Left lung (tissue), 14 donors: ENCODE measurements at regions of chr12 and their contacts with region 1.

Region 1: DNA sequence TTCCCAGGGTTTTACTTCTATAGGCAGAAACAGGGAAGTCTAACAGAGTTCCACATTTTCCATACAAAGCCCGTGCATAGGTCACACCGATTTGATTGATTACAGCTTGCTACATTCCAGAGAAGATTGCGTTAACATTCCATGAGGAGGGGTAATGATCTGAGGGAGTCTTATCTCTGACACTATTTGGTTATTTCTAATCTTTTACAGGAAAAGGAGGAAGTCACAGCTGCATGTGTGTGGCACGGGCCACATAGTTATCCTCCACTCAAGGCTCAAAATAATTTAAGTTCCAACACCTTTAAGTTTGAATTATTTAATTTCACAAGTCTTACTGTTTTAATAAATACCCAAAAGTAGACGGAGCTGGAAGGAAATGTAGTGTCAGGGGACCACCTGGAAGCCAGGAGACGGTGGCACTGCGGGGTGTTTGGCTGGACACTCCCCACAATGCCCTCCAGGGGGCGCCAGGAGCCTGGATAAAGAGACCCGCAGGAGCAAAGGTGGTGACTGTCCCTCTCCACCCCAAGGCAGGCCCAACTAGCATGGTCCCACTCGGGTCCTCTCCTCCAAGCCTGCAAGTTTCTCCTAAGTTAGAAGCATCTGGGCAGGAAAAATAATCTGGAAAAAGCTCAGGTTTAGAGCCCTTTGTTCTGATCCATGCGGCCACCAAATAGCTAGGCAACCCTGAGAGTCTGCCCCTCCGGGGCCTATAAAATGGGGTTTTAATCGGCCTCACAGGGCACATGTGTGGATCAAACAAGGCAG is 20.2 kb downstream of the KRT8 start:
- DNase-seq: peak in 3 of 4 donors; percentile 64 to 93 (median 77)
- ATAC-seq: peak; percentile 90
- H3K4me3 ChIP-seq: no peak overlapping the region
- H3K27ac ChIP-seq: no peak overlapping the region
- H3K4me1 ChIP-seq: peaks cover 1 to 8% of the 10 kb centered on the region in 2 donors
- H3K27me3 ChIP-seq: peaks cover 0 to 26% of the 10 kb centered on the region in 2 donors
- CTCF ChIP-seq: peak; percentile 89

Region 2: DNA sequence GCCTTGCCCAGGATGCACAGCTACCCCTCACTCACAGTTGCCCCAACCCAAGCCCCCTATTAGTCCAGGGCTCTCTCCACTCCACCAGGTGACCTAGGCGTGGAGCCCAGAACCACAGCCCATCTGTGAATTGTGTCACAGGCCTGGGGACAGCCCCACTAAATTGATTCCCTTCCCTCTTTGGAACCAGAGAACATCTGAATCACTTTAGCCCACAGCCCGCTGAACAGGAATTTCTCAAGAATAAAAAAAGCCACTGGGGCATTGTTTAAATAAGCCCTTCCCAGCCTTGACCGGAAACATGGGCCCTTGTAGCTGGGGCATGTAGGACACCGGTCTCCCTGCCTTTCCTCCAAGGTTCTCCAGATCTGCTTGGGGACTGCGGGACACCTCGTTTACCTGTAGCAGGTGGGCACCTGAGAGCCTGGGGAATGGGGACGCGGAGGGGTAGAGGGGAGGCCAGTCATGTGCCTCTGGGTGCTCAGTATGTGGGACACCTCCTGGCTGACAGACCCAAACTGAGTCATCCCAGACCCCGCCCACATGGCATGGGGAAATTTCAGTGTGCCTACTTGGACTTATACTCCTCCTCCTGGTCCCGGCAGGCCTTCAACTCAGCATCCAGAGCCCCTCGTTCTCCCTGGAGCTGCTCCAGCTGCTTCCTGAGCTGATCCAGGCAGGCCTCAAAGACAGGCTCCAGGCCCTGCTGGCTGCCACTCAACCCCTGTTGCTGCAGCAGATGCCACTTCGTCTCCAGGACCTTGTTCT is 37.2 kb before region 1 on chr12:
- intact Hi-C with region 1: no loop called
- DNase-seq: no peak
- ATAC-seq: peak; percentile 67
- H3K4me3 ChIP-seq: no peak overlapping the region
- H3K27ac ChIP-seq: no peak overlapping the region
- H3K4me1 ChIP-seq: no peaks in the 10 kb centered on the region
- H3K27me3 ChIP-seq: peaks cover 0 to 37% of the 10 kb centered on the region in 2 donors
- CTCF ChIP-seq: no peak

Region 3: DNA sequence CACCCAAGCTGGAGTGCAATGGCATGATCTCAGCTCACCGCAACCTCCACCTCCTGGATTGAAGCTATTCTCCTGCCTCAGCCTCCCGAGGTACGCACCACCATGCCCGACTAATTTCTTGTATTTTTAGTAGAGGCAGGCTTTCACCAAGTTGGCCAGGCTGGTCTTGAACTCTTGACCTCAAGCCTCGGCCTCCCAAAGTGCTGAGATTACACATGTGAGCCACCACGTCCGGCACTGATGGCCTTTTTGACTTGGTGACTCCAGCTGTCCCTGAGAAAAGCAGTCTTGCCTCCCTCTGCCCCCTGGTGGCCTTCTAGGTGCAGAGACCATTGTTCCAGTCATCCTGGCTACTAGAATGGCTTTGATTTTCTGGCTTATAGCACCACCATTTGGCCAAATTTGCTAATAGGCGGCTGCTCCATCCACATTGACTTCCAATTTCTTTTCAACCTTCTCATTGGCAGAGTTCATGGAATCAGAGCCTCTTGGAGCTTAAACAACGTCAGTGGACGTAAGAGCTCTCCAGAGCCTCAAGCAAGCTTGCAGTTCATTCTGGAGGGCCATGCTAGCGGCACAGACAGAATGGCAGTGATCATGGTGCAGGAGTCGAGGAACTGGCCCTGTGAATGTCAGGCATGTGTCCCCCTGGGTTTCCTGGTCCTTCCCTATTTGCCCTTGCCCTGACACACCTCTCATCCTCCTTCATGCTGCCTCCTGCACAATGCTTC is 96.1 kb after region 1 on chr12:
- intact Hi-C with region 1: loop called (anchors 5 kb)
- DNase-seq: peak in 3 of 4 donors; percentile 82 to 94 (median 84)
- ATAC-seq: peak; percentile 98
- H3K4me3 ChIP-seq: no peak overlapping the region
- H3K27ac ChIP-seq: no peak overlapping the region
- H3K4me1 ChIP-seq: no peaks in the 10 kb centered on the region
- H3K27me3 ChIP-seq: peaks cover 0 to 10% of the 10 kb centered on the region in 2 donors
- CTCF ChIP-seq: peak; percentile 96 to 97

Region 4: GRCh38 chr12:53042607-53043454 is 158.1 kb after region 1 on chr12:
- intact Hi-C with region 1: no loop called
- DNase-seq: no peak
- ATAC-seq: no peak
- H3K4me3 ChIP-seq: no peak overlapping the region
- H3K27ac ChIP-seq: no peak overlapping the region
- H3K4me1 ChIP-seq: peaks cover 13 to 48% of the 10 kb centered on the region in 2 donors
- H3K27me3 ChIP-seq: peaks cover 0 to 10% of the 10 kb centered on the region in 2 donors
- CTCF ChIP-seq: no peak